CD4-positive, alpha-beta memory T cell (primary cell): ENCODE measurements at regions of chr17 and their contacts with region 1.

Region 1: DNA sequence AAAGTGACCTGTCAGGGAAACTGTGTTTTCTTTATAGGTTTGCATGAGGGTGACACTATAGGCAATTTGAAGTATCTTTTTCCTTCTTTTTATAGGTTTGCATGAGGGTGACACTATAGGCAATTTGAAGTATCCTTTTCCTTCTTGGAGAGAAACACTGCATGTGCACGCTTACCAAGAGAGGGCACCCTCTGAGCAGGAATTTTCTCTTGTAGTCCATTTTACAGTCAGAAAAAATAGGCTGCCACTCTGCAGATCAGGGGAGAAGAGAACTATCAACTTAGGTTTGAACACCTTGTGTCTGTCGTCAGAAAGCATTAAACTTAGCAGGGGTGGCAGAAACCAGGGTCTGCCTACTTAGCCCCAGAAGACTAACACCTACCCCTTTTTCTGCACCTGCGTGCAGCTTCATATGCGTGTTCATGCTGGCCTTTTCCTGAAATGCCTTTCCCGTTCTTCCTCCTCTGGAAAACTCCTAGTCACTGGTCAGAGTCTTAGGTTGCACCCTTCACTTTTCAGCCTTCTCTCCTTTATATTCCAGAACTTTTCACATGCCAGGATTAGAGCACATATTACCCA is 16.4 kb upstream of the SMIM36 start:
- DNase-seq: no peak
- H3K4me3 ChIP-seq: no peak overlapping the region
- H3K4me3 Mint-ChIP-seq: no peak overlapping the region
- H3K27ac ChIP-seq: no peak overlapping the region
- H3K27ac Mint-ChIP-seq: no peak overlapping the region
- H3K4me1 ChIP-seq: no peaks in the 10 kb centered on the region
- H3K4me1 Mint-ChIP-seq: no peaks in the 10 kb centered on the region
- H3K27me3 ChIP-seq: no peaks in the 10 kb centered on the region
- H3K27me3 Mint-ChIP-seq: peaks cover 0 to 6% of the 10 kb centered on the region in 2 donors

Region 2: DNA sequence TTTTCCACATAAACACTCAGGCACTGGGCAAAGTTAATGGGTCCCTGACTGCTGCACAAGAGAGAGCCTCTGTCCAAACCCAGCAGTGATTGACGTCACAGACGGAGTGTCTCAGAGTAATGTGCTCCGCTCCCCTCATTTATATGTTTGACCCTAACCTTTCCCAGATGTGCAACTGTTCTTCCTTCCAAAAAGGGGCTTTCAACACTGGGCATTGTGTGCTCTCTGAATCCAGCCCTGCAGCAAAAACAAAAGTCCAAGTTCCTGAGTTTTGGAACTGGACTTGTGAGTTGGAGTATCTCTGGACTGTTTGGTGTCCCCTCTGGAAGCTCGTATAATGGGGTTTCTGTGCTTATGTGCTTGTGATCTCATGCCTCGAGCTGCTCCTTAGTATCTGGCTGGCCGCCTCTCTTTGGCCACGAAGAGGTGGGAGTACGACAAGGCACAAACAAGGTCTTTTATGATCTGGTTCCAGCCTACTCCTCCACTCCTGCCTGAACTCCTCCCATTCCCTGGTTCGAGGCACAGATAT is 60.0 kb after region 1 on chr17:
- CTCF ChIA-PET with region 1: interaction called, 7 read pairs
- POLR2A ChIA-PET with region 1: no interaction called
- intact Hi-C with region 1: loop called (anchors 1 kb)
- DNase-seq: no peak
- H3K4me3 ChIP-seq: no peak overlapping the region
- H3K4me3 Mint-ChIP-seq: no peak overlapping the region
- H3K27ac ChIP-seq: no peak overlapping the region
- H3K27ac Mint-ChIP-seq: no peak overlapping the region
- H3K4me1 ChIP-seq: no peaks in the 10 kb centered on the region
- H3K4me1 Mint-ChIP-seq: peaks cover 10 to 13% (median 11%) of the 10 kb centered on the region in 4 donors
- H3K27me3 ChIP-seq: no peaks in the 10 kb centered on the region
- H3K27me3 Mint-ChIP-seq: no peaks in the 10 kb centered on the region

Region 3: GRCh38 chr17:55641676-55642081 is 114.0 kb after region 1 on chr17:
- CTCF ChIA-PET with region 1: interaction called, 19 read pairs
- POLR2A ChIA-PET with region 1: no interaction called
- intact Hi-C with region 1: loop called (anchors 1 kb)
- DNase-seq: peak in 4 of 5 donors; percentile 2 to 8 (median 6)
- H3K4me3 ChIP-seq: no peak overlapping the region
- H3K4me3 Mint-ChIP-seq: no peak overlapping the region
- H3K27ac ChIP-seq: no peak overlapping the region
- H3K27ac Mint-ChIP-seq: no peak overlapping the region
- H3K4me1 ChIP-seq: no peaks in the 10 kb centered on the region
- H3K4me1 Mint-ChIP-seq: peaks cover 0 to 10% (median 5%) of the 10 kb centered on the region in 4 donors
- H3K27me3 ChIP-seq: no peaks in the 10 kb centered on the region
- H3K27me3 Mint-ChIP-seq: peaks cover 7 to 9% of the 10 kb centered on the region in 2 donors

Region 4: GRCh38 chr17:55735731-55736405 is 208.2 kb after region 1 on chr17:
- CTCF ChIA-PET with region 1: interaction called, 23 read pairs
- POLR2A ChIA-PET with region 1: no interaction called
- intact Hi-C with region 1: no loop called
- DNase-seq: peak; percentile 17 to 38 (median 25)
- H3K4me3 ChIP-seq: no peak overlapping the region
- H3K4me3 Mint-ChIP-seq: no peak overlapping the region
- H3K27ac ChIP-seq: no peak overlapping the region
- H3K27ac Mint-ChIP-seq: peak overlapping the region in 1 of 7 donors; percentile 11
- H3K4me1 ChIP-seq: no peaks in the 10 kb centered on the region
- H3K4me1 Mint-ChIP-seq: no peaks in the 10 kb centered on the region
- H3K27me3 ChIP-seq: no peaks in the 10 kb centered on the region
- H3K27me3 Mint-ChIP-seq: peaks cover 11 to 19% of the 10 kb centered on the region in 2 donors

Region 5: DNA sequence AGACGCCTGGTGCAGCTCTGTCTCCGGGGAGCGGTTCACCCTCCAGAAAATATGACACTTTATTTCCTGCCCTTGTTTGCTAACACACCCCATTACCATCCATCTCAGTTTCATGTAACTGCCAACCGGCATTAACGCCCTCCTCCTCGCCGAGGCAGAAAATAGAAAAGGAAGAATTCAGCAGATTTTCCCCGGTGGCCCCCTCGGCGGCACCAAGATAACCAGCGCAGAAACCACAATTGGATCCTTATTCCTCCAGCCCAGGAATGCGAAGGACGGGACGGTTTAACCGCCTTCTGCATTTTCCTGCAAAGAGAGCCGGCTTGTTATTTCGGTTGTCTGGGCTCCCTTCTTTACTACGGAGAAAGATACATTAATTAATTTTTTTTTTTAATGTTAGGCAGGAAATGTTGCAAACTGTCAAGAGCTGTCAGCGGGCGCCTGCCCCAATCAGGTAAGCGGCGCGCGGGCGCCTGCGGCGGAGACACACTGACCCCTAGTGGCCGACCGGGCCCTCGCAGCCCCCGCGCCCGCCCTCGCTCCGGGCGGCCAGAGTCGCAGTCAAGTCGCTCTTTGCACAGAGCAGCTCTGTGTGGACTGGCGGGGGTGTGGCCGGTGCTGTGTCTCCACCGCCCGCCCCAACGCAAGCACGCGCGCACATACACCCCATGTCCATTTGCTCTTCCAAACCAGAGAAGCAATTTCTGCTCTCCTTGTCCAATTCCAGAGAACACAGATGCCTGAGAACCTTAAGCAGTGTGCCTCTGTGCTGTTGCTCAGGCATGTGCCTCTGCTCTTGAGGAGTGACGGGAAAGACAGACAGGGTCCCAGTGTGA is 1252.5 kb after region 1 on chr17:
- CTCF ChIA-PET with region 1: interaction called, 13 read pairs
- POLR2A ChIA-PET with region 1: no interaction called
- intact Hi-C with region 1: no loop called
- DNase-seq: peak; percentile 80 to 87 (median 84)
- H3K4me3 ChIP-seq: peak overlapping the region in 1 of 2 donors; percentile 58
- H3K4me3 Mint-ChIP-seq: peak overlapping the region; percentile 88 to 100 (median 92)
- H3K27ac ChIP-seq: peak overlapping the region; percentile 56
- H3K27ac Mint-ChIP-seq: peak overlapping the region; percentile 94 to 99 (median 95)
- H3K4me1 ChIP-seq: peaks cover 16% of the 10 kb centered on the region
- H3K4me1 Mint-ChIP-seq: peaks cover 11 to 26% (median 18%) of the 10 kb centered on the region in 4 donors
- H3K27me3 ChIP-seq: no peaks in the 10 kb centered on the region
- H3K27me3 Mint-ChIP-seq: no peaks in the 10 kb centered on the region